ENCODE measurements at regions of chr4 and their contacts with region 1.

Region 1: DNA sequence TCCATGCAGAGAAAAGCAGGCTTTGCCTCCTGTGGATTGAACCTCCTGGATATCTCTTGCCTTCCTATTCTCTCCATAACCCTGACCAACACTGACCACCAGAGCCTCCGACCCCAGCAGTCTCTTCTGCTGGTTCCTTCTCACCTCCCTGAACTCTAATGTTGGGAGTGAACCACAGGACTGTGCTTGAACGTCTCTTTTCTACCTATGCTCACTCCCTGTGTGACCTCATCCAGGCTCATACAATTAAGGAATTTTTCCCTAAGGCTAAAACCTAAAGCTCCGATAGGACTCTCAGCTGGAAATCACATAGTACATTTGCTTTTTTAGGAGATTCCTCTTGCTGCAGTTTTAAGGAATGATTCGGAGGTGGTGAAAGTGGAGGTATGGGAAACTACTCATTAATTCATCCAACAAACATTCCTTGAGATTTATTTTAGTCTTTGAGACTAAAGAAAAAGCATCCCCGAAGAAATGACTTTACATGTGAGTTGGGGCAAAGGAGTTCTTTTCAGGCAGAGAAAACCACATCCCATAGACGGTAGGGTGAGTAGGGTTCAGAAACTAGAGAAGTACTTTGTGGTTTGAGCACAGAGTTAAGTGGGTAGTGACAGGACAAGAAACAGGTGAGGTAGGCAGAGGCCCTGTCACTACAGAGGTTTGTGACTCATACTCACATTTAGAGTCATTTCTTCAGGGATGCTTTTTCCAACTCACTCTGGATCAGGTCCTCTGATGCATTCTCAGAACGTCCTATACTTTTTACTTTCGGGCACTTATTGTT is 30.8 kb downstream of the NDNF start:
- DNase-seq: peak; percentile 6
- H3K4me3 Mint-ChIP-seq: no peak overlapping the region
- H3K27ac Mint-ChIP-seq: peak overlapping the region; percentile 21
- H3K4me1 Mint-ChIP-seq: peaks cover 16% of the 10 kb centered on the region
- H3K27me3 Mint-ChIP-seq: peaks cover 41% of the 10 kb centered on the region

Region 2: DNA sequence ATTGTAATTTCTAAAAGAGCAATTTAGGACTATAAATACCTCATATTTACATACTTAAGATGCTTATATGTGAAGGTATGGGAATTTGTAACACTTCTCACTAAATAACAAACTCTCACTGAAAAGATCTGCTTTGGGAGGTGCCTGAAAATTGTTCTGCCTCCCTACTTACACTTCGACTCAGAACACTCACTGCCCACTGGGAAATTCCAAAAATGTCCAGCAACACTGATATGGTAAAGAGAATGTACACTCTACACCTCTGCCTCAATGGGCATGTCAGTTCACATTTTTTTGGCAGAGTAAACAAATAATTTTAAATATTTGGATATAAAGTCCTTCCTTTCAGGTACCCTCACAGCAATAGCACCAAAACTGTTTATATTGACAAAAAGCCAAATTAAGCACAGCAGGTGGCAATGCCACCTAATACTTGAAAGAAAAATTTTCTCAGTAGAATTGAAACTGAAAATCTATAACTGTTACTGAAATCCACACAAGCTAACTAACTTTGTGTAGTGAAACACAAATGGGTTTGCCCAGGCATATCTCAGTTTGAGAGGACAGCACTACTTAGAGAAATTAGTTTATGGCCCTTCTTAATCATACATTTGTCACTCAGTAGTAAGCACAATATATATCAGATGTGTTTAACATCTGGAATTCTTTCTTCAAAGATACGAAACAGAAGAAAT is 186.0 kb before region 1 on chr4:
- intact Hi-C with region 1: loop called (anchors 10 kb)
- DNase-seq: no peak
- H3K4me3 Mint-ChIP-seq: no peak overlapping the region
- H3K27ac Mint-ChIP-seq: no peak overlapping the region
- H3K4me1 Mint-ChIP-seq: no peaks in the 10 kb centered on the region
- H3K27me3 Mint-ChIP-seq: peaks cover 12% of the 10 kb centered on the region

Region 3: GRCh38 chr4:120922381-120923206 is 118.9 kb before region 1 on chr4 and contains the start of gene PRDM5:
- intact Hi-C with region 1: loop called (anchors 1 kb)
- DNase-seq: peak; percentile 3
- H3K4me3 Mint-ChIP-seq: peak within 1 kb of the TSS; percentile 86
- H3K27ac Mint-ChIP-seq: peak within 1 kb of the TSS; percentile 60
- H3K4me1 Mint-ChIP-seq: peaks cover 11% of the 10 kb centered on the region
- H3K27me3 Mint-ChIP-seq: peaks cover 52% of the 10 kb centered on the region
- total RNA-seq, gene PRDM5: not detected in 2 replicates

Region 4: GRCh38 chr4:121072224-121073003 is 30.9 kb after region 1 on chr4 and contains the start of gene NDNF:
- intact Hi-C with region 1: loop called (anchors 2 kb)
- DNase-seq: peak; percentile 34
- H3K4me3 Mint-ChIP-seq: peak within 1 kb of the TSS; percentile 82
- H3K27ac Mint-ChIP-seq: peak within 1 kb of the TSS; percentile 59
- H3K4me1 Mint-ChIP-seq: peaks cover 20% of the 10 kb centered on the region
- H3K27me3 Mint-ChIP-seq: peaks cover 83% of the 10 kb centered on the region
- total RNA-seq, gene NDNF: 0.39 TPM in 1 of 2 replicates, not detected in the other

Region 5: DNA sequence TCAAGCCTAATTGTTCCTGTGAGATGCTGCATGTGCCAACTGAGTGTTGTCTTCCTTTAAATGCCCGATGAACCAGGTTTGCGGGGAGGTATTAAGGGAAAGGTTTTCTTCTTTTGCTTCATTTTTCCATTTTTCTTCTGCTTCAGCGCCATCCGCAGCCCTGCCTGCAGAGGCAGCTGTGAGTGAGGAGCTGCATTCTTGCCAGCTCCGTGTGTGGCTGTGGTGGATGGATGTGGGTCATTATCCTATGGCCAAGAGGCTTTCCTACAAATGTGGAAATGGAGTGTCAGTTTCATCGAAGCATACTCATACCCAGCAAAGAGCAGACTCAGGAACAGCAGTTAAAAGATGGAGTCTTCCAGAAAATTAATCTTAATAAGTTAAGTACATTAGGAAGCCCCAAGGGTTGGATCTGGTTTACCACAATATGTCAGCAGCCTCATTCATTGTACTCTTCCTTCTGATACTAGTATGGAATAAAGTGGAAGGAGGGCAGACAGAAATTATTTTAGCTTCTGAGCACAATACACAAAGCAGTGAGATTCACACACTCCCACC is 85.0 kb after region 1 on chr4:
- intact Hi-C with region 1: no loop called
- DNase-seq: no peak
- H3K4me3 Mint-ChIP-seq: no peak overlapping the region
- H3K27ac Mint-ChIP-seq: no peak overlapping the region
- H3K4me1 Mint-ChIP-seq: peaks cover 27% of the 10 kb centered on the region
- H3K27me3 Mint-ChIP-seq: no peaks in the 10 kb centered on the region

Region 6: GRCh38 chr4:121139533-121140222 is 98.2 kb after region 1 on chr4:
- intact Hi-C with region 1: loop called (anchors 1 kb)
- DNase-seq: no peak
- H3K4me3 Mint-ChIP-seq: peak overlapping the region; percentile 31
- H3K27ac Mint-ChIP-seq: peak overlapping the region; percentile 69
- H3K4me1 Mint-ChIP-seq: peaks cover 41% of the 10 kb centered on the region
- H3K27me3 Mint-ChIP-seq: no peaks in the 10 kb centered on the region

Region 7: DNA sequence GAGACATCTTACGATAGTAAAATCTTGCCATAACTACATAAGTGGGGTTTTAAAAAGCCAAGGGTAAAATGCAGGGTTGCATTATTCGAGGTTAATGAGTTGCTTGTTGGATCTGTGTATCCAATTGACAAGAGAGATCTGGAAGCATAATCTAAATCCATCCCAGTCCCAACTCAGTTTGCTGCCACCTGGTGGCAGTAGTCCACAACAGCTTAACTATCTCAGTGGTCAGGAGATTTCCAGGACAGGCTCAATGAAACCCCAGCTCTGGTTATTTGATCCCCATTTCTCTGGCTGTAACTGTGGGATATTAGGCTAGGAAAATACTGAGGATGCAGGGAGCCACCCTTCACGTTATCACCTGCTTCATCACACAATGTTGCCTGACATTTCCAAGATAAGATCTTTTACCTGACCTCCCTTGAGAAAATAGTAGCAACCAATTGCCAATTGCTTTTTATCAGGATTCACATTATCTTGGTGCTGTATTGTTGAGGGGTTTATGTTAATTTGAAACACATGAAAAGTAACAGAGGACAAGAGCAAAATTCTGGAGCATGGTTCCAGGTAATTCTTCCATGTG is 210.8 kb after region 1 on chr4:
- intact Hi-C with region 1: loop called (anchors 5 kb)
- DNase-seq: peak; percentile 21
- H3K4me3 Mint-ChIP-seq: no peak overlapping the region
- H3K27ac Mint-ChIP-seq: no peak overlapping the region
- H3K4me1 Mint-ChIP-seq: peaks cover 66% of the 10 kb centered on the region
- H3K27me3 Mint-ChIP-seq: peaks cover 6% of the 10 kb centered on the region

Region 8: GRCh38 chr4:121307445-121308327 is 266.2 kb after region 1 on chr4:
- intact Hi-C with region 1: no loop called
- DNase-seq: peak; percentile 27
- H3K4me3 Mint-ChIP-seq: no peak overlapping the region
- H3K27ac Mint-ChIP-seq: peak overlapping the region; percentile 25
- H3K4me1 Mint-ChIP-seq: peaks cover 16% of the 10 kb centered on the region
- H3K27me3 Mint-ChIP-seq: peaks cover 14% of the 10 kb centered on the region